Kidney (tissue), 22 donors: ENCODE measurements at regions of chr2 and their contacts with region 1.

Region 1: DNA sequence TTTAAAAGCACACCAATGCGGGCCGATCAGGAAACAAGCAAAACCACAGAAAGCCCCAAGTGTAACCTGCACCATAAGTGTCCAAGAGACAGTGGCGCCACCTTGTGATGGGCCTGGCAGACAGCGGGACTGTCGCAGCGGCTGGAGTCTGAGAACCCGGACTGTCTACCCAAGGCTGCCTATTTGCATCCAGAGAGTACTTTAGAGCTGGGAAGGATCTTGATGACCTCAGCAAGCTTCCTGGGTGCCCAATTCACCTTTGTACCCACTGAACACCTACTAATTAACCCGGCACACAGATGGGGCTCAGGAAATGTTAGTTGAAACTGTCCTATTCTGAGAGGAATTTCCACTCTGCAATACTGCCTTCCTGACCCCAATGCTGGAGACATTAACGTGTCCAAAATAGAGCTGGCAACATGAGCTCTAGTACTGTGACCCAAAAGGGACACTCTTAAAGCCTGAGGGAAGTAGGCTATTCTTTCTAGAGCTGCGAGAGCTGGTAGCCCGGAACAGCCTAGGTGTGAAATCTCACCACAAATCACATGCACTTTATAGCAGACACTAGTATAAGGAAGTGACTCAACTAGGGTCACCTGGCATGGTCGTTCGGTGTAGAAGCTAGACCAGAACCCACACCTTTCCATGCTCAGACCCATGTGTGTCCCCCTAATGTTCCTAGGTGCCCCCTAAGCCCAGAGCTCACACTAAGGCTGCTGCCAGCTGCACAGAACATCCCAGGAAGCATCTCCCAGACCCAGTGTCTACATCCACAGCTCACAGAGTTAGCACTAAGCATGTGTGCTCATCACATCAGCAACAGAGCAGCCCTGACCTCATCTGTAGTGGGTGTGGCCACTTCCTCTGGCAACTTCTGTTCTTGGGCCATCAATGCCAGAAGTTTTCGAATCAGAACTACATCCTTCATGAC is 25.4 kb downstream of the POLR1A start:
- DNase-seq: peak; percentile 70 to 89 (median 81)
- H3K4me3 ChIP-seq: peak overlapping the region in 1 of 3 donors; percentile 17
- H3K27ac ChIP-seq: peak overlapping the region; percentile 55 to 84
- H3K4me1 ChIP-seq: peaks cover 0 to 7% (median 7%) of the 10 kb centered on the region in 3 donors
- H3K27me3 ChIP-seq: no peaks in the 10 kb centered on the region
- CTCF ChIP-seq: peak; percentile 86

Region 2: DNA sequence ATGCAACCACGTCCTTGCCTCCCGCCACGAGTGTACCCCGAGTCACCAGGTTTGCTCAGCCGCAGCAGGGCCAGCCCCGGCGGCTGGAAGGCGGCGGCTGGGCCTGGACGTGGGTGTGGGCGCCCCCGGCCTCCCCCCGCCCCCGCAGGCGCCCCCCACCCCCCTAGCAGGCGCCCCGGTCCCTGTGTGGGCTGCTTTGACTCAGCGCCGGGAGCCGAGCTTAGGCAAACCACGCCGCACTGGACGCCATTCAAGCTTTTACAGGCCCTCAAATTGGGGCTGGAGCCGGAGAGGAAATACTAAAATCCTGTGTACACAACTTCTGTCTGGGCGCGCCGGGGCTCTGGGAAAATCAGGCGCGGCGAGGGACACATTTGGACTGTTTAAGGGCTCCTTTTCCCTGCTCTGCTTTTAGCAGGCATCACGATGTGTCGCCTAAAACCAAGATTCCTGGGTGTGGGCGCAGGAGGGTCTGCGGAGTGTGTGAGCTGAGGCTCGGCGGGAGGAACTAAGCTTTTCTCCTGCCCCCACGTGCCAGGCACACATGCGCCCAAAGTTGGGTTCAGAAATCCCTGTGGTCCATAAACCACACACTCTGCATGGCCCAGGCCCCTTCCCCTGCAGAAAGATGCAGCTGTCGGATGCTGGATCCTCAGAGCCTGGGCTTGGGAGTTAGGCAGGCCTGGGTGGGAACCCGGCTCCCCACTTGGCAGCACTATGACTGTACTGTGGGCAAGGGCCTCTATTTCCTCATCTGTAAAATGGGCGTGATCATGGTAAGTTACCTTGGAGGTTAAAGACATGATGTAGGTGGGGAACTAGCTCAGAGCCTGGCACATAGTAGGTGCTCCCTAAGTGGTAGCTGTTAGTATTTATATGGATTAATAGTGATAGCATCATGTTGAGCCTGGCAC is 268.8 kb before region 1 on chr2:
- intact Hi-C with region 1: no loop called
- DNase-seq: peak in 3 of 5 donors; percentile 44 to 80 (median 79)
- H3K4me3 ChIP-seq: no peak overlapping the region
- H3K27ac ChIP-seq: no peak overlapping the region
- H3K4me1 ChIP-seq: peaks cover 0 to 4% (median 3%) of the 10 kb centered on the region in 3 donors
- H3K27me3 ChIP-seq: no peaks in the 10 kb centered on the region
- CTCF ChIP-seq: no peak

Region 3: DNA sequence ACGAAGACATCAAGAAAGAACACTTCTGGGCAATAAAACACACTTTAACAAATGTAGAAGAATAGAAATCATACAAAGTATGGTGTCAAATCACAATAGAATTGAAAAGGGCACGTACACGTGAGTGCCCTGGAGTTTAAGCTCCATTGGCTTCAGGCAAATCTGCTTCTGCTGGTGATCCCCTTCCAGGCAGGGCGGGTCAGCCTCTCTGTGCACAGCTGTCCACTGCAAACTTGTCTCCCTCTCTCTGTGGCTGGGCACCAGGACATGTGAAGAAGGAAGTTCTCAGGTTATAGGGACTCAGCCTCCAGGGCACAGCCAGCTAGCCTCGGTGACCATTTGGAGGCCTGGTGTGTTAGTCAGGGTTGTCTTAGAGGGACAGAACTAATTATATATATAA is 257.5 kb before region 1 on chr2:
- intact Hi-C with region 1: loop called (anchors 5 kb)
- DNase-seq: no peak
- H3K4me3 ChIP-seq: no peak overlapping the region
- H3K27ac ChIP-seq: no peak overlapping the region
- H3K4me1 ChIP-seq: peaks cover 0 to 6% (median 0%) of the 10 kb centered on the region in 3 donors
- H3K27me3 ChIP-seq: no peaks in the 10 kb centered on the region
- CTCF ChIP-seq: no peak